ENCODE measurements at regions of chr7 and their contacts with region 1.

Region 1: GRCh38 chr7:129218514-129219062 is 6.2 kb upstream of the AHCYL2 start:
- DNase-seq: no peak
- H3K4me3 ChIP-seq: no peak overlapping the region
- H3K27me3 ChIP-seq: no peaks in the 10 kb centered on the region
- CTCF ChIP-seq: peak; percentile 85

Region 2: DNA sequence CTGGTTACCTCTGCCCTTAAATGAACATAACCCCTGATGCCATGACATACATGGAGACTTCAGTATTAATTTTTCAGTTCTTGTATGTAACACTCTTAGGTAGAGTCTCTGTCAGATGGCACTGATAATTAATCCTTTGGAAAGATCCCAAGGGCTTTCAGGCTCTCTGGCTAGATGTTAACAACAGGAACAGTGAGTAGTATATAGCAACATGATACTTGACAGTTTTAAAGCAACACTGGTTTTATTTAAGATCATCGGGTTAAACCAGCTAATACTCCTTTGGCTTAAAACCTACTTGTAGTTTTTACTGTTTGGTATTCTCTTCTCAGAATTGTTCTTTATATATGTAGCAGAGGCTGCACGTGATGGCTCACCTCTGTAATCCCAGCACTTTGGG is 33.5 kb after region 1 on chr7:
- CTCF ChIA-PET with region 1: interaction called, 19 read pairs
- POLR2A ChIA-PET with region 1: no interaction called
- DNase-seq: no peak
- H3K4me3 ChIP-seq: no peak overlapping the region
- H3K27me3 ChIP-seq: no peaks in the 10 kb centered on the region
- CTCF ChIP-seq: no peak

Region 3: GRCh38 chr7:129271500-129272355 is 53.1 kb after region 1 on chr7:
- CTCF ChIA-PET with region 1: interaction called, 82 read pairs
- POLR2A ChIA-PET with region 1: no interaction called
- DNase-seq: no peak
- H3K4me3 ChIP-seq: no peak overlapping the region
- H3K27me3 ChIP-seq: no peaks in the 10 kb centered on the region
- CTCF ChIP-seq: peak; percentile 69

Region 4: GRCh38 chr7:129315960-129316359 is 97.4 kb after region 1 on chr7:
- CTCF ChIA-PET with region 1: interaction called, 10 read pairs
- POLR2A ChIA-PET with region 1: no interaction called
- DNase-seq: no peak
- H3K4me3 ChIP-seq: no peak overlapping the region
- H3K27me3 ChIP-seq: no peaks in the 10 kb centered on the region
- CTCF ChIP-seq: no peak

Region 5: DNA sequence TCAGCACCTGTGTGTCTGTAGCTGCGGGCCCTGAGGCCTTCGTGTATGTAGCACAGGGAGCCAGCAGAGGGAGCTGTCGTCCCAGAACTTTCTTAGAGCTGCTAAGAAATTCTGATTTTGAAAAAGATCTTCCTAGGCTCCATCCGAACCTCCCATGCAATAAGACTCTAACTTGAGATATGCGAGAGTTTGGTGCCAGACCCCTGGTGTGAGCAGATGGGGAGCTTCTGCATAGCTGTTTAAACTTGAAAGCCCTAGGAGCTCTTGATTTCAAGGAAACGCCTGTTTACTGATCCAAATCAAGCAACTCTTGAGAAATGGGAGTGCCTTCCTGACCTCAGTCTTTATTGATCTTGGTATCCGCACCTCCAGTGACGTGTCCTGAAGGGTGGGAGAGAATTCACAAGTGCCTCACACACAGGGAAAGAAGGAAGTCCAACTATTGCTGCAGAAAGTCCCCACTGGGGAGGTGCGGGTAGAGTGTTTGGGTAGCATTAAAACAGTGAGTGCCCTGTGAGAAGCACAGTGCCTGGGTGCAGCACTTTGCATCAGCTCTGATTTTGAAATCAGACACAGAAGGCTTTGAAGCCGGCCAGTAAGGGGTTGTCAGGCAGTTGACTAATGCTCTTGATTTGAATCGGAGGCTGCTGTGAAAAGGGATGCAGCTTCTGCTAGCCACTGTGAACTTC is 149.3 kb after region 1 on chr7:
- CTCF ChIA-PET with region 1: interaction called, 13 read pairs
- POLR2A ChIA-PET with region 1: no interaction called
- DNase-seq: no peak
- H3K4me3 ChIP-seq: no peak overlapping the region
- H3K27me3 ChIP-seq: no peaks in the 10 kb centered on the region
- CTCF ChIP-seq: peak; percentile 92

Region 6: DNA sequence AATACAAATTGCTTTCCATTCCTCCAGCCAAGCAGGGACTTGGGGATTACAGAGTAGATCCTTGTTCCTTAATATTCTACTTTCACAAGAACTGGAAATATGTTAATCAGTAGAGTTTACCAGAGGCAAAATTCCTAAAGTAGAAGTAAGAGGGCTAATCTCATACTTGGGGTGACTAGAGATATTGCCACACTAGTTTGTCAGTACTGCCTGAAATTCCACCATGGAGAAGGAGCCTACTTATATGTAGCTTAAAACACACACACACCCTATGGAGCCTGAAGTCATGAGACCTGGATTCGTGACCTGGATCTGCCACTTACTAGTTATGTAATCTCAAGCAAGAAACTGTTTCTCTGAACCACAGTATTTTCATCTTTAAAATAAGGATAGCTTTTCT is 249.5 kb after region 1 on chr7:
- CTCF ChIA-PET with region 1: interaction called, 41 read pairs
- POLR2A ChIA-PET with region 1: no interaction called
- DNase-seq: peak; percentile 14
- H3K4me3 ChIP-seq: no peak overlapping the region
- H3K27me3 ChIP-seq: no peaks in the 10 kb centered on the region
- CTCF ChIP-seq: no peak